Activated B cell treated with CpG ODN at 0.5 μM for 24 hours (primary cell): ENCODE measurements at regions of chr7 and their contacts with region 1.

Region 1: DNA sequence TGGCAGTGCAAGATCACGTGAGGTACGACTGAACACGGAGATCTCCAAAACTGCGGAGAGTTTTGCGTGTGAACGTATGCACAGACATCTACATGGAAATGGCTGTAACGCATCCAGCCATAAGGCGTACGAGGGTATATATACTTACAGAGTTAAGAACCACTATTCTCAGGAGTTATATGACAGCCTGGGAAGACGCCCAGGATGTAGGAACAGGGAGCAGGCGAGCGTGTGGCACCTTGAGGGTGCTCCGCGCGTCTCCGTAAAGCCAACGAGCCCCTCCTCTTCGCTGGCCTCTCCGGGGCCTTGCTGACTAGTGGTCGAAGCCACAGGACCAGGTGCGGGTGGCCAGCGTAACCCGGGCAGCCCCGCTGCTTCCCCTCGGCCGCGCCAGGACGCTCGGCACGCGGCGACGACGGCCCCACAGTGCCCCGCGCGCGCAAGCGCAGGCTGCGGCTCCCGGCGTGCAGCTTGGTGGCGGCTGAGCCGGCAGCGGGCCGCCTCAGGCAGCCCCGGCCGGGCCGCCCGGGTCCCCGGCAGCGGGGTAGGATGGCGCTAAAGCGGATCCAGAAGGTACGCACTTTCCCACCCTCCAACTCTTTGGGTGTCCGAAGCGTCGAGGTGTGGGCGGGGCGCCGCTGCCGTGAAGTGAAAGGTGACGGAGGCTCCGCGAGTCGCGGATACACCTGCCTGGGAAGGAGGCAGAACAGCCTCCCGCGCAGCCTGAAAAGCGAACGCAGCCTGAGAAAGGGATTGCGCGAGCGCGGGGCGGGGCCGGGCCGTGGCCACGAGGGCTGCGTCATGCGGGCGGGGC is at the start of gene UBE2D4:
- DNase-seq: peak; percentile 89
- ATAC-seq: peak; percentile 88
- H3K4me3 Mint-ChIP-seq: peak within 1 kb of the TSS; percentile 87
- H3K27ac Mint-ChIP-seq: peak within 1 kb of the TSS; percentile 93
- H3K4me1 Mint-ChIP-seq: peaks cover 24% of the 10 kb centered on the region
- H3K27me3 Mint-ChIP-seq: no peaks in the 10 kb centered on the region
- CTCF ChIP-seq: no peak
- total RNA-seq, gene UBE2D4: 18.9 and 19.6 TPM in 2 replicates

Region 2: DNA sequence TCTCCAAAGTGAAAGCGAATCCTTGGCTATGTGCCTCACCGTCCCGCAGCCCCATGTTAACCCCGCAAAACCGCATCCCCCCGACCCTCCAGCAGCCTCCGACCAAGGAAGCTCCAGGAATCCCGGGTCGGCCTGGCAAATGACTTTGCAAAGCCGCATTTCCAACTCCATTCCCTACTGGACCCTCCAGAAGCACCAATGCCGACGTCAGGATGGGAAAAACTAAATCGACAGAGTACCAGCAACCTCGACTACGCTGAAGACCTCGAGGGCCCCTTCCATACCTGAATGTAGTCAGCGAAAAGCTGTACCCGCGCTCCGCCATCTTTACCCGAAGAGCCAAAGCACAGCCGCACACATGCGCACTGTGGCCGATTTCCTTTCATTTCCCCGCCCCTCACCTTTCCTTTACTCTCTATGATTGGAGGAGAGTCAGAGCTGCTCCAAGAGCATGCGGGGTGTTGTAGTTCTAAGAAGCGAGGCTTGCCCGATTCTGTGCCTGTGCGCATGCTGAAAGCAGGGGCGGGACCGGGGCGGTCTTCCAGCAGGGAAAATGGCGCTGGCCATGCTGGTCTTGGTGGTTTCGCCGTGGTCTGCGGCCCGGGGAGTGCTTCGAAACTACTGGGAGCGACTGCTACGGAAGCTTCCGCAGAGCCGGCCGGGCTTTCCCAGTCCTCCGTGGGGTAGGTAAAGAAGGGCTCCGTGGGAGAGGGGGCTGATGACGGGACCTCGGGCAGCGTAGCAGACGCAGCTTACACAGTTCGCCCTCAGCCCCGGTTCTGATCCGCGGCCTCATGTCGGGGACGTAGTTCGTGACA is 994.1 kb before region 1 on chr7 and contains the starts of genes MRPL32 and PSMA2:
- CTCF ChIA-PET with region 1: no interaction called
- POLR2A ChIA-PET with region 1: no interaction called
- intact Hi-C with region 1: loop called (anchors 1 kb)
- DNase-seq: peak; percentile 88
- ATAC-seq: peak; percentile 100
- H3K4me3 Mint-ChIP-seq: peak within 1 kb of the TSS; percentile 100
- H3K27ac Mint-ChIP-seq: peak within 1 kb of the TSS; percentile 97
- H3K4me1 Mint-ChIP-seq: peaks cover 57% of the 10 kb centered on the region
- H3K27me3 Mint-ChIP-seq: no peaks in the 10 kb centered on the region
- CTCF ChIP-seq: no peak
- total RNA-seq, gene MRPL32: 38.8 and 39.5 TPM in 2 replicates
- total RNA-seq, gene PSMA2: 88.1 and 109 TPM in 2 replicates

Region 3: GRCh38 chr7:43729214-43729923 is 196.8 kb before region 1 on chr7 and contains the start of gene COA1:
- CTCF ChIA-PET with region 1: no interaction called
- POLR2A ChIA-PET with region 1: no interaction called
- intact Hi-C with region 1: loop called (anchors 1 kb)
- DNase-seq: peak; percentile 75
- ATAC-seq: peak; percentile 92
- H3K4me3 Mint-ChIP-seq: peak within 1 kb of the TSS; percentile 95
- H3K27ac Mint-ChIP-seq: peak within 1 kb of the TSS; percentile 88
- H3K4me1 Mint-ChIP-seq: peaks cover 40% of the 10 kb centered on the region
- H3K27me3 Mint-ChIP-seq: no peaks in the 10 kb centered on the region
- CTCF ChIP-seq: no peak
- total RNA-seq, gene COA1: 49.2 and 56.9 TPM in 2 replicates

Region 4: GRCh38 chr7:43869006-43869866 is 57.0 kb before region 1 on chr7 and contains the start of gene MRPS24:
- CTCF ChIA-PET with region 1: no interaction called
- POLR2A ChIA-PET with region 1: interaction called, 16 read pairs
- intact Hi-C with region 1: loop called (anchors 1 kb)
- DNase-seq: peak; percentile 85
- ATAC-seq: peak; percentile 98
- H3K4me3 Mint-ChIP-seq: peak within 1 kb of the TSS; percentile 93
- H3K27ac Mint-ChIP-seq: peak within 1 kb of the TSS; percentile 89
- H3K4me1 Mint-ChIP-seq: peaks cover 21% of the 10 kb centered on the region
- H3K27me3 Mint-ChIP-seq: no peaks in the 10 kb centered on the region
- CTCF ChIP-seq: no peak
- total RNA-seq, gene MRPS24: 73.1 and 78.1 TPM in 2 replicates

Region 5: GRCh38 chr7:43906331-43907010 is 19.7 kb before region 1 on chr7 and contains the start of gene URGCP:
- CTCF ChIA-PET with region 1: no interaction called
- POLR2A ChIA-PET with region 1: interaction called, 17 read pairs
- intact Hi-C with region 1: loop called (anchors 1 kb)
- DNase-seq: peak; percentile 64
- ATAC-seq: peak; percentile 90
- H3K4me3 Mint-ChIP-seq: peak within 1 kb of the TSS; percentile 94
- H3K27ac Mint-ChIP-seq: peak within 1 kb of the TSS; percentile 92
- H3K4me1 Mint-ChIP-seq: peaks cover 22% of the 10 kb centered on the region
- H3K27me3 Mint-ChIP-seq: no peaks in the 10 kb centered on the region
- CTCF ChIP-seq: no peak
- total RNA-seq, gene URGCP: 21.6 and 23.3 TPM in 2 replicates

Region 6: GRCh38 chr7:44257618-44258422 is 331.6 kb after region 1 on chr7:
- CTCF ChIA-PET with region 1: no interaction called
- POLR2A ChIA-PET with region 1: interaction called, 12 read pairs
- intact Hi-C with region 1: no loop called
- DNase-seq: peak; percentile 41
- ATAC-seq: peak; percentile 79
- H3K4me3 Mint-ChIP-seq: peak overlapping the region; percentile 15
- H3K27ac Mint-ChIP-seq: peak overlapping the region; percentile 77
- H3K4me1 Mint-ChIP-seq: peaks cover 35% of the 10 kb centered on the region
- H3K27me3 Mint-ChIP-seq: no peaks in the 10 kb centered on the region
- CTCF ChIP-seq: no peak

Region 7: GRCh38 chr7:44986218-44987053 is 1060.2 kb after region 1 on chr7:
- CTCF ChIA-PET with region 1: no interaction called
- POLR2A ChIA-PET with region 1: no interaction called
- intact Hi-C with region 1: loop called (anchors 2 kb)
- DNase-seq: peak; percentile 97
- ATAC-seq: peak; percentile 92
- H3K4me3 Mint-ChIP-seq: peak overlapping the region; percentile 98
- H3K27ac Mint-ChIP-seq: peak overlapping the region; percentile 98
- H3K4me1 Mint-ChIP-seq: peaks cover 58% of the 10 kb centered on the region
- H3K27me3 Mint-ChIP-seq: no peaks in the 10 kb centered on the region
- CTCF ChIP-seq: no peak